Activated B cell treated with CpG ODN at 0.5 μM for 24 hours (primary cell): ENCODE measurements at regions of chr6 and their contacts with region 1.

Region 1: GRCh38 chr6:62285612-62286469 is at the start of gene KHDRBS2:
- DNase-seq: peak; percentile 86
- ATAC-seq: peak; percentile 99
- H3K4me3 Mint-ChIP-seq: peak within 1 kb of the TSS; percentile 95
- H3K27ac Mint-ChIP-seq: peak within 1 kb of the TSS; percentile 80
- H3K4me1 Mint-ChIP-seq: peaks cover 36% of the 10 kb centered on the region
- H3K27me3 Mint-ChIP-seq: no peaks in the 10 kb centered on the region
- CTCF ChIP-seq: no peak
- total RNA-seq, gene KHDRBS2: 5.5 and 6.9 TPM in 2 replicates

Region 2: DNA sequence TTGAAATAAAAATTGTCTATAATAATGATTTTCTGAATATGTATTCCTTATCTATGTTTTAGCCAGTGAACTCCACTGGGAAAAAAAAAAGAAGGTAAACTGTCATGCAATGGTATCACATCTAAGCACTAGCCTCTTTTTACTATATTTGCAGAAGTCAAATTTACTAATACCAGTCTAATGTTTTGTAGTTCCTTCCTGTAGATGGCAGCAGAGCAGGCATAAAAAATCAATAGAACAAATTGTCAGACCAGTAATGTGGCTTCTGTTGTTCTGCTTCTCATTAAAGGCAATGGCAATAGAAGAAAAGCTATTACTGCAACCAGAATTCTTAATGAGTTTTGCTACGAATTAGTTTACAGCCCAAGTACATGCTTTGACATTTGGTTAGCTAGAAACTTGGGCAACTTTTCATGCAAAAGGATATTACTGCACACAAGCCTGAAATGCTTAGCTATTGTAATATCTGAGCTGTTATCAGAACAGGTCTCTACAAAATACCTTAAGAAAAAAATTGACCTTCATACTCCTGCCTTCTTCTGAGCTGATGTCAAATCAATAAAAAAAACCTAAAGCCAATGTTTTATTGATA is 476.7 kb before region 1 on chr6:
- CTCF ChIA-PET with region 1: interaction called, 26 read pairs
- POLR2A ChIA-PET with region 1: no interaction called
- intact Hi-C with region 1: loop called (anchors 1 kb)
- DNase-seq: no peak
- ATAC-seq: no peak
- H3K4me3 Mint-ChIP-seq: no peak overlapping the region
- H3K27ac Mint-ChIP-seq: no peak overlapping the region
- H3K4me1 Mint-ChIP-seq: no peaks in the 10 kb centered on the region
- H3K27me3 Mint-ChIP-seq: no peaks in the 10 kb centered on the region
- CTCF ChIP-seq: peak; percentile 54

Region 3: DNA sequence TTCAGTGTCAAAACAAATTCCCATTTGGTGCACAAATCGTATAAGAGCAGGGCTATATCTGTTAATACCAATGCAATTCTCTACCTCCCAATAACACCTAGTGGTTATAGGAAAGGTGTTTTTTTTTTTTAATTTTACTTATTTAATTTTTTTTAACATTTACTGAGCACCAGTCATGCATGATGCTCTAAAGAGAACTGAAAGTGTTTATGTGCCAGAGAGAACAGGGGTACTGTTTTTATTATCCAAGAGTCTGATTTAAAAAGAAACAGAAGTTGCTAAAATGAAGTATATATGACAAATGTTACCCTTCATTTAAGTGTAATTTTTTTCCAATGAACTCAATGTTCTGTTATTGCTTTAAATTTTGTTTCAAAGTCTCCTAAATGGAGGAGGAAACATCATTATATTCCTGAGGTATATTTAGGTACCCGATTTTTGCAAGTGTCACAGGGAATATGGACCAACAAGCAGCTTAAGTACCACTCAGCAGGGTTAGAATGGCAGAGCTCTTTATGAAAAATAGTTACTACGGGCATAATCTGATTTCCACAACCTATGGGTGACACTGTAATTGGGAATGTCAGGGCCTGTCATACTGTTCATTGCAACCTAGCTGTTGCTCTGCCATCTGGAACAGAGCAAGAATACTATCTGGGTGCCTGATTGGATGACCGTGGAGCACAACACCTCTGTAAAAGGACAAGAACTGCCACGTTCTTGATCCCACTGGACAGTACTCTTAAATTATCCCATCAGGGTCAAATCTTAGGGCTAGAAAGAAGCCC is 195.2 kb before region 1 on chr6:
- CTCF ChIA-PET with region 1: no interaction called
- POLR2A ChIA-PET with region 1: no interaction called
- intact Hi-C with region 1: loop called (anchors 5 kb)
- DNase-seq: no peak
- ATAC-seq: peak; percentile 86
- H3K4me3 Mint-ChIP-seq: peak overlapping the region; percentile 62
- H3K27ac Mint-ChIP-seq: peak overlapping the region; percentile 82
- H3K4me1 Mint-ChIP-seq: peaks cover 54% of the 10 kb centered on the region
- H3K27me3 Mint-ChIP-seq: no peaks in the 10 kb centered on the region
- CTCF ChIP-seq: no peak

Region 4: GRCh38 chr6:62298745-62299392 is 13.0 kb after region 1 on chr6:
- CTCF ChIA-PET with region 1: interaction called, 7 read pairs
- POLR2A ChIA-PET with region 1: interaction called, 13 read pairs
- intact Hi-C with region 1: loop called (anchors 1 kb)
- DNase-seq: no peak
- ATAC-seq: peak; percentile 66
- H3K4me3 Mint-ChIP-seq: peak overlapping the region; percentile 56
- H3K27ac Mint-ChIP-seq: peak overlapping the region; percentile 86
- H3K4me1 Mint-ChIP-seq: peaks cover 24% of the 10 kb centered on the region
- H3K27me3 Mint-ChIP-seq: no peaks in the 10 kb centered on the region
- CTCF ChIP-seq: no peak

Region 5: GRCh38 chr6:62775427-62776022 is 489.7 kb after region 1 on chr6:
- CTCF ChIA-PET with region 1: no interaction called
- POLR2A ChIA-PET with region 1: no interaction called
- intact Hi-C with region 1: loop called (anchors 1 kb)
- DNase-seq: no peak
- ATAC-seq: no peak
- H3K4me3 Mint-ChIP-seq: no peak overlapping the region
- H3K27ac Mint-ChIP-seq: no peak overlapping the region
- H3K4me1 Mint-ChIP-seq: no peaks in the 10 kb centered on the region
- H3K27me3 Mint-ChIP-seq: no peaks in the 10 kb centered on the region
- CTCF ChIP-seq: no peak